Caco-2 (cell line): ENCODE measurements at regions of chr4 and their contacts with region 1.

Region 1: GRCh38 chr4:75995727-75996126 is 5.0 kb upstream of the SDAD1 start:
- DNase-seq: peak in 1 of 2 experiments; percentile 49
- H3K4me3 ChIP-seq: no peak overlapping the region
- H3K4me3 Mint-ChIP-seq: no peak overlapping the region
- H3K27ac Mint-ChIP-seq: no peak overlapping the region
- H3K4me1 ChIP-seq: 0 out of 2 replicates have a peak, but pooled peaks cover 3% of the 10 kb centered on the region
- H3K4me1 Mint-ChIP-seq: peaks cover 9% of the 10 kb centered on the region
- H3K27me3 ChIP-seq: no peaks in the 10 kb centered on the region
- H3K27me3 Mint-ChIP-seq: no peaks in the 10 kb centered on the region
- CTCF ChIP-seq: peak; percentile 48 to 54

Region 2: GRCh38 chr4:76067652-76068286 is 72.0 kb after region 1 on chr4:
- CTCF ChIA-PET with region 1: interaction called, 5 read pairs
- POLR2A ChIA-PET with region 1: no interaction called
- intact Hi-C with region 1: loop called (anchors 1 kb)
- DNase-seq: peak; percentile 64 to 76
- H3K4me3 ChIP-seq: no peak overlapping the region
- H3K4me3 Mint-ChIP-seq: no peak overlapping the region
- H3K27ac Mint-ChIP-seq: no peak overlapping the region
- H3K4me1 ChIP-seq: no peaks in the 10 kb centered on the region
- H3K4me1 Mint-ChIP-seq: no peaks in the 10 kb centered on the region
- H3K27me3 ChIP-seq: no peaks in the 10 kb centered on the region
- H3K27me3 Mint-ChIP-seq: no peaks in the 10 kb centered on the region
- CTCF ChIP-seq: peak; percentile 69 to 72

Region 3: DNA sequence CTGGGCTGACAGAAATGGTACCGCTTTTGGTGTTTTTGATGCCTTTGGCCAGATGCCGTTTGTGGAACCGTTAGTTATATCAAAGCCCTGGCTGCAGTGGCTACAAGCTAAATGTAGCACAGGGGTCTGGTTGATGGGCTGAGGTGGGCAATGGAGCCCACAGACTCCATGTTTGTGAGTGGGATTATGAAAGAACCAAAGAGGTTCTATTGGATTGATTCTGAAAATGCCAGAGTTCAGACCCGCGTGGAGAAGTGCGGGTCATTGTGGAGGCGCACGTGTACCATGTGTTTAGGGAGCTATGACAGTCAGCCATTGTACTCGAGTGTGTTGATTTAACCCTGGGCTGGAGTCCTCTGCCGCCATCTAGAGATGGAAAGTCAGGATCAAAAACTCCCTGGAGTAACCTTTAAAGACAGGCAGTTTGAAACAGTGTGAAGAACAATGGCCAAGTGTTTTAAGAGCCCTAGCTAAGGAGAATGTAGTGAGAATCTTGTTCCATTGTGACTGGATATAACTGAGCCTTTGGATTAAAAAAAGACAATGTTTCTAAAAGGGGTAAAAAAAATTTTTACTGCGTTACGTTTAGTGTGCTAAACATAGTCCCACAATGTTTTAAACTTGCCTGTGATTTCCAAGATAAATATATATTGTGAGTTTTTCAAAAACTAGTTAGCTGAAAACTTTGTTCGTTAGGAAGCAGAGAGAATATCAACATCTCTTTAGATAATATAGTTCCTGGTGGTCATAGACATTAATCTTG is 91.5 kb after region 1 on chr4:
- CTCF ChIA-PET with region 1: interaction called, 23 read pairs
- POLR2A ChIA-PET with region 1: no interaction called
- intact Hi-C with region 1: loop called (anchors 1 kb)
- DNase-seq: peak; percentile 67 to 71
- H3K4me3 ChIP-seq: peak overlapping the region; percentile 8; the same call in 1 of the 2 replicates
- H3K4me3 Mint-ChIP-seq: peak overlapping the region; percentile 69
- H3K27ac Mint-ChIP-seq: no peak overlapping the region
- H3K4me1 ChIP-seq: no peaks in the 10 kb centered on the region
- H3K4me1 Mint-ChIP-seq: peaks cover 5% of the 10 kb centered on the region
- H3K27me3 ChIP-seq: no peaks in the 10 kb centered on the region
- H3K27me3 Mint-ChIP-seq: no peaks in the 10 kb centered on the region
- CTCF ChIP-seq: peak; percentile 40 to 76